Activated T-helper 1 cell treated with anti-CD3 and anti-CD28 coated beads, Interleukin-12 subunit alpha, Interleukin-12 subunit beta, Interleukin-2, Interleukin-4 antibody, amounts not matched to agents 30 ng/mL and 10 ng/mL and 1 ng/mL, durations not matched to agents 14 hours and 24 hours and 36 hours (primary cell): ENCODE measurements at regions of chr10 and their contacts with region 1.

Region 1: GRCh38 chr10:22340362-22341189 is 4.7 kb upstream of the SPAG6 start:
- DNase-seq: peak; percentile 67
- H3K4me3 Mint-ChIP-seq: peak overlapping the region; percentile 86
- H3K27ac Mint-ChIP-seq: peak overlapping the region; percentile 96
- H3K4me1 Mint-ChIP-seq: peaks cover 47% of the 10 kb centered on the region
- H3K27me3 Mint-ChIP-seq: peaks cover 76% of the 10 kb centered on the region

Region 2: GRCh38 chr10:21173812-21174714 is 1166.5 kb before region 1 on chr10:
- intact Hi-C with region 1: loop called (anchors 10 kb)
- DNase-seq: no peak
- H3K4me3 Mint-ChIP-seq: no peak overlapping the region
- H3K27ac Mint-ChIP-seq: no peak overlapping the region
- H3K4me1 Mint-ChIP-seq: no peaks in the 10 kb centered on the region
- H3K27me3 Mint-ChIP-seq: peaks cover 33% of the 10 kb centered on the region

Region 3: GRCh38 chr10:22228943-22229801 is 111.4 kb before region 1 on chr10:
- intact Hi-C with region 1: loop called (anchors 1 kb)
- DNase-seq: peak; percentile 77
- H3K4me3 Mint-ChIP-seq: peak overlapping the region; percentile 92
- H3K27ac Mint-ChIP-seq: peak overlapping the region; percentile 98
- H3K4me1 Mint-ChIP-seq: peaks cover 32% of the 10 kb centered on the region
- H3K27me3 Mint-ChIP-seq: peaks cover 11% of the 10 kb centered on the region

Region 4: DNA sequence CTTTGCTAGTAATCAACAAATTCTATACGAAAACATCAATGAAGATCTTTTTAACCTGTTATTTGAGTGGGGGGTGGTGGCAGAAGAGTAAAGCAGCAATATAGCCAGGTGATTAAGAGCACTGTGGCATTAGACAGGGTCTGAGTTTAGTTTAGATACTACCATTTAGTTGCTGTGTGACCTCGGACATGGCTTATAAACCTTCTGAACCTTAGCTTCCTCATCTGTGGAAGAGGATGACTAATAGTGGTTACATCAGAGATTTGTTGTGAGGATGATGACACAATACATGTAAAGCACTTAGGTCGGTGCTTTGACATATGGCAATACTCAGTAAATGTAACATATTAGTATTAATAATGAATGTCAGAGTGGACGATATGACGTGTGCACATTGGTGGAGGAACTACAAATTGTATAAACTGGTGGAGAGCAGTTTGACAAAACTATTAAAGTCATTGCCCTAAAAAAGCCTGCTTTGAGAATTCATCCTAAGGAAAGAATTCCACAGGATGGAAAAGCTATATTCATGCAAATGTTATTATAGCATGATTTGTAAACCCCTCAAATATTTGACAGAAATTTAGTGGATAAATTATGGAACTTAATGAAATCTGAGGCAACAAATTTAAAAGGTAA is 29.0 kb after region 1 on chr10:
- intact Hi-C with region 1: loop called (anchors 2 kb)
- DNase-seq: no peak
- H3K4me3 Mint-ChIP-seq: no peak overlapping the region
- H3K27ac Mint-ChIP-seq: no peak overlapping the region
- H3K4me1 Mint-ChIP-seq: peaks cover 50% of the 10 kb centered on the region
- H3K27me3 Mint-ChIP-seq: no peaks in the 10 kb centered on the region

Region 5: GRCh38 chr10:22475651-22476600 is 135.3 kb after region 1 on chr10:
- intact Hi-C with region 1: loop called (anchors 1 kb)
- DNase-seq: peak; percentile 3
- H3K4me3 Mint-ChIP-seq: peak overlapping the region; percentile 86
- H3K27ac Mint-ChIP-seq: peak overlapping the region; percentile 86
- H3K4me1 Mint-ChIP-seq: peaks cover 20% of the 10 kb centered on the region
- H3K27me3 Mint-ChIP-seq: peaks cover 61% of the 10 kb centered on the region

Region 6: DNA sequence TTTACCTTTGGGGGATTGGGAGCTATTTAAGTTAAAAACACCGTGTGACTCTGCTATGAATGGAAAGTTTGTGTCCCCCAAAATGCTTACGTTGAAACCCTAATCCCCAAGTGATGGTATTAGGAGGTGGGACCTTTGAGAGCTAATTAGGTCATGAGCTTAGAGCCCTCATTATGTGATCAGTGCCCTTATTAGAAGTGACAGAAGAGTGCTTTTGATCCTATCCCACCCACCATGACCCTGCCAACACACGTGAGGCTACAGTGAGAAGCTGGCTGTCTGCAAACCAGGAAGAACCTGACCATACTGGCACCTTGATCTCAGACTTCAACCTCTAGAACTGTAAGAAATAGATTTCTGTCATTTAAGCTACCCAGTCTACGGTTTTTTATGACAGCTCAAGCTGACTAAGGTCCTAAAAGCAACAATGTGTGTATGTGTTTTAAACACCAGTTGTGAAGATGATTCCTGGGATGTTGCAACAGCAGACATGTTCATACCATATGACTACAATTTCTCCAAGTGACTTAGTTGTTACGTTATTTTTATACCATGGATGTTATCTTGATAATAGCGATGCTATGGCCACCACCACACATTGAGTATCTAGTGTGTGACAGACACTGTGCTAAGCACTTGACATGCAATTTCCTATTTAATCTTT is 249.4 kb after region 1 on chr10:
- intact Hi-C with region 1: no loop called
- DNase-seq: no peak
- H3K4me3 Mint-ChIP-seq: no peak overlapping the region
- H3K27ac Mint-ChIP-seq: no peak overlapping the region
- H3K4me1 Mint-ChIP-seq: peaks cover 5% of the 10 kb centered on the region
- H3K27me3 Mint-ChIP-seq: no peaks in the 10 kb centered on the region

Region 7: DNA sequence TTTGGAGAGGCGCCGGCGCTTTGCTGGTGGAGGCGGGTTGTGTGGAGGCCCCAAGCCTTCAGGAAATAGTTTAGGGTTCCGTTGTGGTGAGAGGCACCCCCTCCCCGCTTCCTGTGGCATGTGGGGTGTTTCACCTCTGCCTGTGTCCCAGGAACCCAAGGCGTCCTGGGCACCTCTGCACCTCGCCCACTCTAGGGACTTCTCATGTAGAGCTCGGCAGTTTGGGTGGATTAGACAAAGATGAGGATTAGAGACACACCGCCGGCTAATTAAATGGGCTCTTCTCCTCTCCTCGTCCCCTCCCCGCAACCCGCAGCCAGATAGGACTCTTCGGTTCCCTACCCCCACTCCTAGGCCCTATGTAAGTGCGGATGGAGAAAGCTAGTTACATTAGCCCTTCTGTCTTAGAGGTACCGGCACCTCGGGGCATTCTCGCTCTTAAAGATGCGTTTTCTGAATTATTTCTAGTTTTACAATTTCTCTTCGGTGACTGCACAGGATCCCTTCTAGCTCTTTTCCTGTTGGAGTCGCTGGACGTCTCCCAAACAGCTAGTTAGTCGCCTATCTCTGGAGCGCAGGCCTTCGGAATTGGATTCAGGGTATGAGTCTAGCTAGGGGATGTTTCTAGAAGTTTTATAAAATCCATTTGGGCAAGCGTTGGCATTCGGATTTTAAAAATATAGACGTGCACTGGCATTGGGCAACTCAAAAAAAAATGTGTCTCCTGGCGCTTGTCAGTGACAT is 859.4 kb after region 1 on chr10:
- intact Hi-C with region 1: loop called (anchors 5 kb)
- DNase-seq: no peak
- H3K4me3 Mint-ChIP-seq: no peak overlapping the region
- H3K27ac Mint-ChIP-seq: peak overlapping the region; percentile 7
- H3K4me1 Mint-ChIP-seq: no peaks in the 10 kb centered on the region
- H3K27me3 Mint-ChIP-seq: peaks cover 80% of the 10 kb centered on the region